GM12878 (cell line): ENCODE measurements at regions of chr12 and their contacts with region 1.

Region 1: GRCh38 chr12:92445253-92446082 is 257.3 kb upstream of the PLEKHG7 start:
- DNase-seq: peak; percentile 97
- ATAC-seq: peak; percentile 90
- H3K4me3 ChIP-seq: peak overlapping the region; percentile 41
- H3K27ac ChIP-seq: peak overlapping the region; percentile 100
- H3K4me1 ChIP-seq: peaks cover 44% of the 10 kb centered on the region
- H3K27me3 ChIP-seq: no peaks in the 10 kb centered on the region
- CTCF ChIP-seq: no peak
- EP300 ChIP-seq: peak; percentile 89 to 91
- POLR2A ChIP-seq: peak; percentile 61
- RAD21 ChIP-seq: peak; percentile 32; the same call in 1 of the 2 replicates

Region 2: DNA sequence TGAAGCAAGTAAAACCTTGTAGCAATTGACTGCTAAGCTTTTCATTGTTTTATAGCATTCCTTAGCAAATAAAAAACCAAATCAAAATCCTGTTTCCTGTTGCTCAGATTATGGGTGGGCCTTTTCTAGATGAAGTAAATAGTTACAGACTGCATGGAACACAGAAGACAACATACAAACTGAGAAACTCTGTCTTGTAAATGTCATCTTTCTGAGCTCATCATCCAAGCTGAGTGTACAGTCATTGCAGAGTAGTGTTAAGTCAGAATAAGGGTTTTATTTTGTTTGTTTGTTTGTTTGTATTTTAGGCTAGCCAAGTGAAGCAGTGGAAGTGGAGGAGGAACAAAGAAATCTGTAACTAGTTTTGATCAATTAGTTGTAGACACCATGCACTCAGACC is 275.4 kb before region 1 on chr12:
- CTCF ChIA-PET with region 1: no interaction called
- POLR2A ChIA-PET with region 1: interaction called, 3 read pairs
- RAD21 ChIA-PET with region 1: no interaction called
- SMC1A ChIA-PET with region 1: interaction called, 10 read pairs
- in situ Hi-C with region 1: no loop called
- intact Hi-C with region 1: no loop called
- DNase-seq: no peak
- ATAC-seq: no peak
- H3K4me3 ChIP-seq: no peak overlapping the region
- H3K27ac ChIP-seq: no peak overlapping the region
- H3K4me1 ChIP-seq: peaks cover 16% of the 10 kb centered on the region
- H3K27me3 ChIP-seq: no peaks in the 10 kb centered on the region
- CTCF ChIP-seq: no peak
- EP300 ChIP-seq: no peak
- POLR2A ChIP-seq: no peak
- RAD21 ChIP-seq: no peak

Region 3: DNA sequence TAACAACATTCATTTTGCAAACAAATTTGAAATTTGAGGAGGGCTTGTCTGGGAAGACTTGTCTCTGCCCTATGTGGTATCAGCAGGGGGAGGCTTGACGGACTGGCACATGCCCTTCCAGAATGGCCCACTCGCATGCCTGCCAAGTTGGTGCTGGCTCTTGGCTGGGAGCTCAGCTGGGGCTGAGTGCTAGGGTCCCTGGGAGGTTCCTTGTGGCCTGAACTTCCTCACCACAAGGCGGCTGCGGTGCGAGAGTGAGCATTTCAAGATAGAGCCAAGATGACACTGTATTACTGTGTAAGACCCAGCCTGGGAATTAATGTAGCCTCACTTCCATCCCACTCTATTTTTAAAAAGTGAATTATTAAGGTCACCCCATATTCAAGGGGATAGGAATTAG is 14.3 kb before region 1 on chr12:
- CTCF ChIA-PET with region 1: interaction called, 7 read pairs
- POLR2A ChIA-PET with region 1: interaction called, 34 read pairs
- RAD21 ChIA-PET with region 1: interaction called, 63 read pairs
- SMC1A ChIA-PET with region 1: interaction called, 117 read pairs
- in situ Hi-C with region 1: no loop called
- intact Hi-C with region 1: loop called (anchors 1 kb)
- DNase-seq: no peak
- ATAC-seq: peak; percentile 64
- H3K4me3 ChIP-seq: no peak overlapping the region
- H3K27ac ChIP-seq: peak overlapping the region; percentile 10
- H3K4me1 ChIP-seq: peaks cover 46% of the 10 kb centered on the region
- H3K27me3 ChIP-seq: no peaks in the 10 kb centered on the region
- CTCF ChIP-seq: peak; percentile 6 to 42 (median 40); a peak in 3 of 6 replicates
- EP300 ChIP-seq: no peak
- POLR2A ChIP-seq: no peak
- RAD21 ChIP-seq: peak; percentile 61

Region 4: GRCh38 chr12:92457458-92458180 is 12.2 kb after region 1 on chr12:
- CTCF ChIA-PET with region 1: interaction called, 11 read pairs
- POLR2A ChIA-PET with region 1: interaction called, 10 read pairs
- RAD21 ChIA-PET with region 1: interaction called, 67 read pairs
- SMC1A ChIA-PET with region 1: interaction called, 88 read pairs
- in situ Hi-C with region 1: no loop called
- intact Hi-C with region 1: loop called (anchors 1 kb)
- DNase-seq: no peak
- ATAC-seq: no peak
- H3K4me3 ChIP-seq: no peak overlapping the region
- H3K27ac ChIP-seq: no peak overlapping the region
- H3K4me1 ChIP-seq: peaks cover 26% of the 10 kb centered on the region
- H3K27me3 ChIP-seq: no peaks in the 10 kb centered on the region
- CTCF ChIP-seq: no peak
- EP300 ChIP-seq: no peak
- POLR2A ChIP-seq: no peak
- RAD21 ChIP-seq: no peak

Region 5: GRCh38 chr12:92485351-92486348 is 40.2 kb after region 1 on chr12:
- CTCF ChIA-PET with region 1: interaction called, 3 read pairs
- POLR2A ChIA-PET with region 1: interaction called, 7 read pairs
- RAD21 ChIA-PET with region 1: interaction called, 14 read pairs
- SMC1A ChIA-PET with region 1: interaction called, 19 read pairs
- in situ Hi-C with region 1: no loop called
- intact Hi-C with region 1: no loop called
- DNase-seq: no peak
- ATAC-seq: peak; percentile 58
- H3K4me3 ChIP-seq: no peak overlapping the region
- H3K27ac ChIP-seq: peak overlapping the region; percentile 90
- H3K4me1 ChIP-seq: peaks cover 53% of the 10 kb centered on the region
- H3K27me3 ChIP-seq: no peaks in the 10 kb centered on the region
- CTCF ChIP-seq: no peak
- EP300 ChIP-seq: no peak
- POLR2A ChIP-seq: no peak
- RAD21 ChIP-seq: no peak

Region 6: DNA sequence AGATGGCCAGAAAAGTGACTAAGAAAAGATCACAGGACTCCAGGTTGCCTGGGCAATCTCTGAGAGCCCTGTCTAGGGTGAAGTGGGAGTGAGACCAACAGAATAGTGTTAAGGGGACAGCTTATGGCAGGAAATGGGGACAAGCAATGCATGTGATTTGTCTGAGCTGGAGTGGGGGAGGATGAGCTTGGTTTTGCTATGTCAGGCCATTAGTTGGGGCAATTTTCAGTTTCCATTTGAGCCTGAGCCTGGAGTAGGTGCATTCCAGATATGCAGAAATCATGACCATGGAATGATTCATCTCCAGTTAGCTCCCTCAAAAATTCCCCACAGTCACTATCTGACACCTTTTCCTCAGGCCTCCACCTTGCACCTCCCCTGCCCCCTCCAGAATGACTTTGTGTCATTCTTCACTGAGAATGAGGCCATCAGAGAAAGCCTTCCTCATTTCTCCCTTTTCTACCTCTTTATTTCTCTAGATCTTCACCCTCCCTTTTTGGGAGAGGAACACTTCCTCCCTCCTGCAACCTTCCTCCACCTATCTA is 106.5 kb after region 1 on chr12:
- CTCF ChIA-PET with region 1: interaction called, 3 read pairs
- POLR2A ChIA-PET with region 1: interaction called, 4 read pairs
- RAD21 ChIA-PET with region 1: interaction called, 6 read pairs
- SMC1A ChIA-PET with region 1: interaction called, 19 read pairs
- in situ Hi-C with region 1: loop called (anchors 25 kb)
- intact Hi-C with region 1: no loop called
- DNase-seq: peak; percentile 98
- ATAC-seq: peak; percentile 75
- H3K4me3 ChIP-seq: peak overlapping the region; percentile 17; the same call in 1 of the 2 replicates
- H3K27ac ChIP-seq: peak overlapping the region; percentile 98
- H3K4me1 ChIP-seq: peaks cover 67% of the 10 kb centered on the region
- H3K27me3 ChIP-seq: no peaks in the 10 kb centered on the region
- CTCF ChIP-seq: no peak
- EP300 ChIP-seq: peak; percentile 92 to 97
- POLR2A ChIP-seq: peak; percentile 57
- RAD21 ChIP-seq: no peak